ENCODE measurements at regions of chr14 and their contacts with region 1.

Region 1: DNA sequence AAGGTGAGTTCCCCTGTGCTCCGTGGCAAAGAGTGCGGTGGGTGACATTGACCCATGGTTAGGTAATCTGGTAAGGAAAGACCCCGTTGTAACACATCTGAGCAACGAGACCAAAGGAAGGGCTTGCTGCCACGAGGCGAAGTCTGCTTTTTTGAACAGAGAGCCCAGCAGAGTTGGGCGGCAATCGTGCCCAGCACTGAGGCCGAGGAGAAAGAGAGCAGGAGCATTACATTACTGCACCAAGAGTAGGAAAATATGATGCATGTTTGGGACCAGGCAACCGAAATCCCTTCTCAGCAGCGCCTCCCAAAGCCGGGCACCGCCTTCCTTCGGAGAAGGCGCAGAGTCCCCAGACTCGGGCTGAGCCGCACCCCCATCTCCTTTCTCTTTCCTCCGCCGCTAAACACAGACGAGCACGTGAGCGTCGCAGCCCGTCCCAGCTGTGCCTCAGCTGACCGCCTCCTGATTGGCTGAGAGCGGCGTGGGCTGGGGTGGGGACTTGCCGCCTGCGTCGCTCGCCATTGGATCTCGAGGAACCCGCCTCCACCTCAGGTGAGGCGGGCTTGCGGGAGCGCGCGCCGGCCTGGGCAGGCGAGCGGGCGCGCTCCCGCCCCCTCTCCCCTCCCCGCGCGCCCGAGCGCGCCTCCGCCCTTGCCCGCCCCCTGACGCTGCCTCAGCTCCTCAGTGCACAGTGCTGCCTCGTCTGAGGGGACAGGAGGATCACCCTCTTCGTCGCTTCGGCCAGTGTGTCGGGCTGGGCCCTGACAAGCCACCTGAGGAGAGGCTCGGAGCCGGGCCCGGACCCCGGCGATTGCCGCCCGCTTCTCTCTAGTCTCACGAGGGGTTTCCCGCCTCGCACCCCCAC is at the start of gene HIF1A:
- DNase-seq: peak; percentile 98
- H3K4me3 Mint-ChIP-seq: peak within 1 kb of the TSS; percentile 95
- H3K27ac Mint-ChIP-seq: peak within 1 kb of the TSS; percentile 90
- H3K4me1 Mint-ChIP-seq: peaks cover 23% of the 10 kb centered on the region
- H3K27me3 Mint-ChIP-seq: no peaks in the 10 kb centered on the region
- CTCF ChIP-seq: no peak
- total RNA-seq, gene HIF1A: 193 and 202 TPM in 2 replicates

Region 2: GRCh38 chr14:61475316-61475715 is 219.7 kb before region 1 on chr14:
- CTCF ChIA-PET with region 1: interaction called, 10 read pairs
- POLR2A ChIA-PET with region 1: interaction called, 39 read pairs
- intact Hi-C with region 1: loop called (anchors 1 kb)
- DNase-seq: peak; percentile 84
- H3K4me3 Mint-ChIP-seq: no peak overlapping the region
- H3K27ac Mint-ChIP-seq: no peak overlapping the region
- H3K4me1 Mint-ChIP-seq: peaks cover 58% of the 10 kb centered on the region
- H3K27me3 Mint-ChIP-seq: no peaks in the 10 kb centered on the region
- CTCF ChIP-seq: peak; percentile 46

Region 3: DNA sequence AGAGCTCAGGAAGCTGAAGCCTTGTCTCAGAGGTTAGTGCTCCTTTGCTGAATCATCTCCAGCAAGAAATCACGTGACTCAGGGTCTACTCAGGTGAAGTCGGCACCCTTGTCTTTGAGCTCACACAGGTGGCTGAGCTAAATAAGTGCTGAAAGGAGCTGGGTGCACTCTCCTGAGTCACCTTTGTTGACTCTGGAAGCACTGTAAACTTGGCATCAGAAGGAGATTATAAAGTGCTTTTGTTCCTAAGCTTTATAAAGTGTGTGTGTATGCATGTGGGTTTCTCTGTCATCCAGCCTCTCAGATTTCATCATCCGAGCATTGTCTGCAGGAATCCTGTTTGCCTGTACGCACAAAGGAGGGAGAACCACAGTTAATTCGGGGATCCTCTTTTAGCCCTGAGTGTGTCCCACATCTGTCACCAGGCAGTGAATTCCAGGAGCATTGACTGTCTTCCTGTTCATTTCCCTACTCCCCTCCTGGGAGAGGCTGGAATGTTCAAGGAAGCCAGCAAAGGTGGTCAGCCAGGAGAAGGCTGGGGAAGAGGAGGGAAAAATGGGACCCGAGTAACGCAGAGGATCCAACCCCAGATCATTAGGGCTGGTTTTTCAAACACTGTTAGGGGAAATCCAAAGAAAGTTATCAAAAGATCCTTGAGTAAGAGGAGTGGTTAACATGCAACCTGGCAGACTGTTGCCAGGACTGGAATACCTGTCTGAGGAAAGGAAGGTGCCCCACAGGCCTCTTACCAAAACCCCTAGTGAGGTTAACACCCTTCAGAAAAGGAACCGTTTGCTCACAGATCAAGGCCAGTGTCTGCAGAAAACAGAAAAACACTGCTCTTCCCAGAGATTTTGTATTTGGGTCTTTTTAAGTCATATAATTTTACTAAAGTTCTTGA is 157.2 kb before region 1 on chr14:
- CTCF ChIA-PET with region 1: interaction called, 4 read pairs
- POLR2A ChIA-PET with region 1: interaction called, 17 read pairs
- intact Hi-C with region 1: no loop called
- DNase-seq: peak; percentile 97
- H3K4me3 Mint-ChIP-seq: peak overlapping the region; percentile 10
- H3K27ac Mint-ChIP-seq: peak overlapping the region; percentile 88
- H3K4me1 Mint-ChIP-seq: peaks cover 32% of the 10 kb centered on the region
- H3K27me3 Mint-ChIP-seq: no peaks in the 10 kb centered on the region
- CTCF ChIP-seq: no peak

Region 4: DNA sequence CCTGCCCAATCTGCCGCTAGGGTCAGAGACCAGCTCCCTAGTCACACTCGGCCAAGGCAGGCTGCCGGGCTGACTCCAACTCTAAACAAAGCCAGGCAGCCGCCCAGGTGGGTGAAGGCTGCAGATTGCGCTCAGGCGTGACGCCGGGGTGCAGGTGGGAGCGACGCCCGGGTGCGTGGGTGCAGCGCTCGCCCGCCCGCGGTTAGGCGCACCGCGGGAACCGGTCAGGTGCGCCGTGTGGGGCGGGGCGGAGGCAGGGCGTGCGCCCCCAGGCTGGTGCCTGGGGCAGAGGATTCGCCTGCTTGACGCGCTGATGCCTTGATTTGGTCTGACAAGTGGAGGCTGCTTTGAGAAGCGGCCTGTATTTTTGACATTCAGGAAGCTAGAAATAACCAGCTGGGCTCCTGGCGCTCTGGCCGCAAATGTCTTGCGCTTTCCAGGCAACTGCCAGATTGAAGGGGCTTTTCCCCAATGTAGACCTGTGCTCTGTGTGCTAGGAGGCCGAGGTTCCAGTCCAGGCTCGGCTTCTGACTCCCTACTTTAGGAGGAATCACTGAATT is 126.4 kb before region 1 on chr14:
- CTCF ChIA-PET with region 1: interaction called, 4 read pairs
- POLR2A ChIA-PET with region 1: interaction called, 45 read pairs
- intact Hi-C with region 1: loop called (anchors 2 kb)
- DNase-seq: peak; percentile 69
- H3K4me3 Mint-ChIP-seq: peak overlapping the region; percentile 67
- H3K27ac Mint-ChIP-seq: peak overlapping the region; percentile 85
- H3K4me1 Mint-ChIP-seq: peaks cover 75% of the 10 kb centered on the region
- H3K27me3 Mint-ChIP-seq: no peaks in the 10 kb centered on the region
- CTCF ChIP-seq: peak; percentile 7

Region 5: GRCh38 chr14:61644834-61645233 is 50.2 kb before region 1 on chr14:
- CTCF ChIA-PET with region 1: no interaction called
- POLR2A ChIA-PET with region 1: interaction called, 11 read pairs
- intact Hi-C with region 1: loop called (anchors 5 kb)
- DNase-seq: peak; percentile 30
- H3K4me3 Mint-ChIP-seq: no peak overlapping the region
- H3K27ac Mint-ChIP-seq: no peak overlapping the region
- H3K4me1 Mint-ChIP-seq: peaks cover 49% of the 10 kb centered on the region
- H3K27me3 Mint-ChIP-seq: no peaks in the 10 kb centered on the region
- CTCF ChIP-seq: no peak

Region 6: GRCh38 chr14:61730756-61731373 is 35.8 kb after region 1 on chr14:
- CTCF ChIA-PET with region 1: interaction called, 5 read pairs
- POLR2A ChIA-PET with region 1: interaction called, 13 read pairs
- intact Hi-C with region 1: no loop called
- DNase-seq: no peak
- H3K4me3 Mint-ChIP-seq: no peak overlapping the region
- H3K27ac Mint-ChIP-seq: peak overlapping the region; percentile 28
- H3K4me1 Mint-ChIP-seq: peaks cover 5% of the 10 kb centered on the region
- H3K27me3 Mint-ChIP-seq: no peaks in the 10 kb centered on the region
- CTCF ChIP-seq: peak; percentile 52

Measured in MCF 10A (cell line).